ENCODE measurements at regions of chr4 and their contacts with region 1.

Region 1: GRCh38 chr4:54746218-54746617 is 88.5 kb downstream of the KIT start:
- DNase-seq: no peak
- ATAC-seq: no peak

Region 2: GRCh38 chr4:54683616-54684346 is 62.4 kb before region 1 on chr4:
- intact Hi-C with region 1: loop called in 1 of 2 experiments (anchors 10 kb)
- DNase-seq: peak in 1 of 2 donors; percentile 35
- ATAC-seq: no peak

Measured in left colon (tissue), 2 donors.